Cardiac septum (tissue), 1 donor: ENCODE measurements at regions of chr14 and their contacts with region 1.

Region 1: DNA sequence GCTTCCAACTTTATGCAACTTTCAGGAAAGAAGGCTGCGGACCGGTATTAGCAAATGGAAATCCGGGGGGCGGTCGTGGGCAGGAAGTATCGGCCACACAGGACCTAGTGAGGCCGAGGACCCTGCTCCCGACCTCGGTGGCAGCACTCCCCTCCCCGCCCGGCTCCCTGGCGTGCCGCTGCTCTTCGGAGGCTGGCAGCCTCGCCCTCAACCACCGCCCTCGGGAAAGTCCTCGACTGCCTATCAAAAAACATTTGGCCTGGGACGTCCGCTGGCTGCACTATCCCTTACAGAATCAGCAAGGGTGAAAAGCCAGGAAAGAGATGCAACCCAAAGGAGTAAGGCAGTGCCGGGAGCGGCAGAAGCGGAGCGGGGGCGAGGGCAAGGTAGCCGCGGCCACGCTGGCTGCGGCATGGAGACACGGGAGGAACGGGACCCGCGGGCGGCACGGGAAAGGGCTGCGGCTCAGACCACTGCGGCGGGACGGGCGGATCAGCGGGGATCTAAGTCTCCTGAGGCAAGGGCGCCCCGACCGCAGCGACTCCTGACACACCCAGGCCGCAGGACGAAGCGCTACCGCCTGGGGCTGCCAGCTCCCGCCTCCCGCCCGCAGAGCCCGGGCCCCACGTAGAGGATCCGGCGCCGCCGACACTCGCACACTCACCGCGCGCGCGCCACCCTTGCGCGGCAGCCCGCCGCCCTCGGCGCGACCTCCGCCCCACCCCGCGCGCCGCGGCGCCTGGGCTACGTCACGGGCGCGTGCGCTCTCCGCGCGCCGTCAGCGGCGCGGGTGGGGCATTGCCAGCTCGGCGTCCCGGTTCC is at the starts of genes BBOF1 and ENTPD5:
- DNase-seq: peak; percentile 94
- total RNA-seq, gene BBOF1: 3.9 TPM
- total RNA-seq, gene ENTPD5: 8.8 TPM

Region 2: GRCh38 chr14:73949744-73950734 is 68.8 kb before region 1 on chr14 and contains the starts of genes COQ6 and FAM161B:
- intact Hi-C with region 1: loop called (anchors 1 kb)
- DNase-seq: peak; percentile 95
- total RNA-seq, gene COQ6: 39.9 TPM
- total RNA-seq, gene FAM161B: 4.7 TPM